Pancreas (tissue), 10 donors: ENCODE measurements at regions of chr20 and their contacts with region 1.

Region 1: GRCh38 chr20:21505161-21505809 is 8.6 kb downstream of the NKX2-2 start:
- DNase-seq: peak in 5 of 6 donors; percentile 38 to 96 (median 76)
- ATAC-seq: peak; percentile 75 to 87 (median 76)
- H3K4me3 ChIP-seq: peak overlapping the region in 1 of 4 donors; percentile 47
- H3K27ac ChIP-seq: no peak overlapping the region
- H3K4me1 ChIP-seq: peaks cover 0 to 11% (median 0%) of the 10 kb centered on the region in 3 donors
- H3K27me3 ChIP-seq: peaks cover 0 to 42% (median 3%) of the 10 kb centered on the region in 4 donors
- CTCF ChIP-seq: peak; percentile 90 to 92 (median 91)

Region 2: DNA sequence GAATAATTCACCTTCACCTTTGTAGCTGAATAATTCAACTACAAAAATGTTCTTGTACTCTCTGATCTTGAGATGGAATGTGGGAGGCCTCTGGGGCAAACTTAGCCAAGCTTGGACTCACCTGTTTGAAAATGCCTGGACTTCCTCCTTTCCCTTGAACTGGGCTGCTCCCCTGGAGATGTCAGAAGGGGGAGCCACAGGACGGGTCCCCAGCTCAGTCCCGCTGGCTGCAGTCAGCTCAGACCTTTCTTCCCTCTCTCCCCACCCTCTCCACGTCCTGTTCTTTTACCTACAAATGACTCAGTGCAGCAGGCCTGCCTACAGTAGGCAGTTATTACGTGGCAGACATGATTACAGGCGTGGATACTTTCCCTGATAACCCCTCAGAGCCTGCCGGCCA is 661.3 kb before region 1 on chr20:
- intact Hi-C with region 1: loop called in 1 of 3 experiments (anchors 10 kb)
- DNase-seq: no peak
- ATAC-seq: peak in 1 of 4 donors; percentile 26
- H3K4me3 ChIP-seq: no peak overlapping the region
- H3K27ac ChIP-seq: no peak overlapping the region
- H3K4me1 ChIP-seq: no peaks in the 10 kb centered on the region
- H3K27me3 ChIP-seq: no peaks in the 10 kb centered on the region
- CTCF ChIP-seq: no peak

Region 3: DNA sequence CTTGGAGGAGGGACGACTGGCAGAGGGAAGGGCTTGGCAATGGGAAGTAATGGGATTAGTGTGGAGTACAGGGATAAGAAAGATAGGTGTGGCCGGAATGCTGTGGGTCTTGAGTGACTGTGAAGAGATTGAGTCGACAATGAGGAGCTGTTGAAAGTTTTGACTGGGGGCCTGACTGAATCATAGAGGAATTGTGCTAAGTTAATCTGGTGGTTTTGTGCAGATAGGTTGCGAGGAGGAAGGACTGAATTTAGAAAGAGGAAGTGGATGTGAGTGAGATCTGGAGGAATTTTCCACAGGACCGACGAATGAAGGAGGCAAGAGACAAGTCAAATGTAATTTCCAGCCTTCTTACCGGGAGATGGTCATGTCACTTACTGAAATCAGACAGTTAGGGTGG is 649.0 kb before region 1 on chr20:
- intact Hi-C with region 1: loop called in 1 of 3 experiments (anchors 10 kb)
- DNase-seq: no peak
- ATAC-seq: no peak
- H3K4me3 ChIP-seq: no peak overlapping the region
- H3K27ac ChIP-seq: no peak overlapping the region
- H3K4me1 ChIP-seq: no peaks in the 10 kb centered on the region
- H3K27me3 ChIP-seq: no peaks in the 10 kb centered on the region
- CTCF ChIP-seq: no peak